Panc1 (cell line): ENCODE measurements at regions of chr1 and their contacts with region 1.

Region 1: GRCh38 chr1:169485544-169486278 is at the start of gene SLC19A2:
- DNase-seq: peak; percentile 91
- ATAC-seq: peak; percentile 99
- H3K4me3 ChIP-seq: peak within 1 kb of the TSS; percentile 84 to 87
- H3K27ac ChIP-seq: peak within 1 kb of the TSS; percentile 97
- H3K4me1 ChIP-seq: peaks cover 27% of the 10 kb centered on the region
- H3K27me3 ChIP-seq: no peaks in the 10 kb centered on the region
- CTCF ChIP-seq: peak; percentile 35
- total RNA-seq, gene SLC19A2: 10.8 TPM

Region 2: DNA sequence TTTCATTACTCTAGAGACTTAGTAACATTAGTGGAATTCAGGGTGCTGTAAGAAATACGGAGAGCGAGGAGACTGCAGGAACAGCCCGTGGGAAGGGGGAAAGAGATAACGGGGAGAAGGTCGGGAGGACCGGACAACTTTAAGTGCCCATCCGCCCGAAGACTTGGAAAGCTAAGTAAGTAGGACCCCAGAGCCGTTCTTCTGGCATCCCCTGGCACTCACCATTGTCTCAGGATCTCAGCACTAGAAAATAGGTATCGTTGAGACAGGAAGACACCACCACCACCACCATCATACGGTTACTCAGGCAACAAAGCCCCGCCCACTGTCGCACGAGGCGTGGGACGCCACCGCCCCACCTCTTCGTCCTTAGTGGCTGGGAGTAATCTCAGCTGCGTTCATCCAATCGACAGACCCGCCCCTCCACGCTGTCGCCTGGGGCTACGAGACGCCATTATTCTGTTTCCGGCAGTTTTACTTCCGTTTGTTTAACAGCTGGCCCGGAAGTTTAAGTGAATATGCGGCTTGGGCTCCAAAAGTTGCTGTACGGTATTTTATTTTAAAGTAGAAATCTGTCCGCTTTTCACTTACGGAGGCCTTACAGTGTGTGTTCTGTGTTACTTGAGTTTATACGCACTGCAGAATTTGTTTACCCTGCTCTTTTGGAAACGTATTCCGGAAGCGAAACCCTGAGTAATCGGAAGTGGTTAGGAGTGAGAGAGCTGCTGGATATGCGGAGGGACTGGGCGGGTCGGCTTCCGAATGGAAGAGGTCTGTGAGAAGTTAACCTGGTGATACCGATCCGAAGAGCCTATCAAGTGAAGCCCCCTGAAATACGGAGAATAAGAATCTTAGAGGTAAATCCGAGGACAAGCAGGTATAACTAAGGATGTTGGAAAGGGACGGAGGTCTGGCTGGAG is 118.0 kb before region 1 on chr1 and contains the starts of genes BLZF1 and NME7:
- CTCF ChIA-PET with region 1: no interaction called
- POLR2A ChIA-PET with region 1: no interaction called
- in situ Hi-C with region 1: no loop called
- intact Hi-C with region 1: loop called (anchors 5 kb)
- DNase-seq: peak; percentile 97
- ATAC-seq: peak; percentile 98
- H3K4me3 ChIP-seq: peak within 1 kb of the TSS; percentile 91 to 99
- H3K27ac ChIP-seq: peak within 1 kb of the TSS; percentile 100
- H3K4me1 ChIP-seq: peaks cover 14% of the 10 kb centered on the region; the same call in 1 of the 2 replicates
- H3K27me3 ChIP-seq: no peaks in the 10 kb centered on the region
- CTCF ChIP-seq: no peak
- total RNA-seq, gene BLZF1: 19.6 TPM
- total RNA-seq, gene NME7: 30.3 TPM